ENCODE measurements at regions of chr10 and their contacts with region 1.

Region 1: DNA sequence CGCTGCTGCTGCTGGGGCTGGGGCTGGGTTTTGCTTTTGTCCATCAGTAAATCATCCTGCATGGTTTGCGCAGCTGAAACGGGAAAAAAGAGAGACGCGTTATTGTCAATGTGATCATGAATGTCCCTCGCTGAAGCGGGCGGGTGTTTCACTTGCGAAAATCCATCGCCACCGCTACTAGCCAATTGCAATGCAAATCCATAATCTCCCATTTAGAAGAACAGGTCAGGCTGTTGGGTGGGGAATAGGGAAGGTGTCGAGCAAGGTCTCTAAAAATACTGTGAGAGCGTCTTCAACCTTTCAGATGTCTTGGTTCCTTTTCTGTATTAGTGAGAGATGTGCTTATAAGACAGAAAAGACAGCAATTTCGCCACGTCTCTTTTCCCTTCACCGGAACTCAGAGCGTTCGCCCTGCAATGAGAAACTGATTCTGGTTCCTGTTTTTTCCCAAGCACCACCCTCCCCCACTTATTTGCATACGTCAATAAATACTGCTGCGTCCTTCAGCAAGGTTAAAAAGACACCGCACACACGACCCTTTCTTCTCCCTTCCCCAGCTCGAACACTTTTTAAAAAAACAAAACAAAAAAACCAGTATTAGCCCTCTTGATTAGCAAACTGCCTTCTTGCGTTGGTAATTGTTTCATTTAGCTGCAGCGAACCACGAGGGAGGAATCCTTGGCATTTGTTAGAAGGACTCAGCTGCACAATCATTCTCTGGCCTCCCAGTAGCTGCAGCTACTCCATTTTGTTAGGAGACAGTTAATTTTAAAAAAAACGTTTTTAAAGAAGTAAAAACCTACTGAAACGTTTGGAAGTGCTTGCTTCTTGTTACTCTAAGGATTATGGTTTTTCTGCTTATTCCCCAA is 50.4 kb downstream of the CPEB3 start:
- DNase-seq: peak; percentile 73
- H3K27ac ChIP-seq: peak overlapping the region; percentile 91
- CTCF ChIP-seq: no peak

Region 2: DNA sequence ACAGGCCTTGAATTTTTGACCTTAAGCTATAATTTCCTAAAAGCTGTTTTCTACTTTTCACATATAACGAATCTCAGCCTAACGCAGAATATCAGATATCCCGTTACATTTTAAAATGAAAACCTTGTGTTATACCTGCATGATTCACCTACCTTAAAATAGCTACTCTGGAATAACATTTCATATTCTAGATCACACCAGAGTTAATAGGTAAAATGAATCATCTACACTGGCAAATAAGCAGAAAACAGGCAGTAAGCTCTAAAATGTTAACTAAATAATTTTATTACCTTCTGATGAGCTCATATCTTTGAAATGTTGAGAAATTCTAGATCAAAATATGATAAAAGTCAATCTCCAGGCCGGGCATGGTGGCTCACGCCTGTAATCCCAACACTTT is 21.0 kb before region 1 on chr10:
- CTCF ChIA-PET with region 1: no interaction called
- POLR2A ChIA-PET with region 1: interaction called, 15 read pairs
- DNase-seq: no peak
- H3K27ac ChIP-seq: peak overlapping the region; percentile 56
- CTCF ChIP-seq: no peak

Region 3: DNA sequence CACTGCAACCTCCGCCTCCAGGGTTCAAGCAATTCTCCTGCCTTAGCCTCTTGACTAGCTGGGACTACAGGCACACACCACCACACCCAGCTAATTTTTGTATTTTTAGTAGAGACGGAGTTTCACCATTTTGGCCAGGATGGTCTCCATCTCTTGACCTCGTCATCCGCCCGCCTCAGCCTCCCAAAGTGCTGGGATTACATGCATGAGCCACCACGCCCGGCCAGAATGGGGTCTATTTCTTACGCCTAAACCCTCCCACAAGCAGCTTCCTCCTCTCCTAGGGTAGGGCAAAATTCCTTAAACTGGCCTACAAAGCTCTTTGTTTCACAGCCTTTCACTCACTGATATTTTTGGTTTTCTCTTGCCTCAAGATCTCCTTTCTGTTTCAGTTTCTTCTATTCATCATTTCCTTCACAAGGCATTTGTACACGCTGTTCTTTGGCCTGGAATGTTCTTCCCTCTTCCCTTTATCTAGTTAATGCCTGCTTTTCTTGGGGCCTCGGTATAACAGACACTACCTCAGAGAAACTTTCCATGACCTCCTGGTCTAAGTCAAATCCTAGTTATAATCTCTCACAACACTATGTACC is 43.7 kb after region 1 on chr10:
- CTCF ChIA-PET with region 1: no interaction called
- POLR2A ChIA-PET with region 1: no interaction called
- DNase-seq: no peak
- H3K27ac ChIP-seq: no peak overlapping the region
- CTCF ChIP-seq: no peak

Region 4: DNA sequence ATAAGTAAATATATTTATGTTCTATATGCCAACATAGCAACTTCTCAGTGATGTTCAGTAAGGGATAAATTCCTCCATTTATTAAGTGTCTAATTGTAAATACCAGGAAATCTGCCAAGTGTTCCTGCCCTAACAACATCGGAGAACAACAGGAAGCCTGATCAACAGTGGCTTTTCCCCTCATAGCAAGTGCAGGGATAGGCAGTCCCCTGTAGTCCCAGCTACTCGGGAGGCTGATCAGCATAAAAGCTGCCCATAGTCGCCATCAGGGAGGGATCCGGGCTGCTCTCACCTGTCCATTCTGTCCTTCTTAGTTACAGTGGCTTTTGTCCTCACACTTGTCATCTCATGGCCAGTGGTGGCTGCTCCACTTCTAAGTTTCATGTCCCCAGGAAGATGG is 192.1 kb after region 1 on chr10:
- CTCF ChIA-PET with region 1: interaction called, 5 read pairs
- POLR2A ChIA-PET with region 1: interaction called, 12 read pairs
- DNase-seq: no peak
- H3K27ac ChIP-seq: no peak overlapping the region
- CTCF ChIP-seq: no peak

Region 5: DNA sequence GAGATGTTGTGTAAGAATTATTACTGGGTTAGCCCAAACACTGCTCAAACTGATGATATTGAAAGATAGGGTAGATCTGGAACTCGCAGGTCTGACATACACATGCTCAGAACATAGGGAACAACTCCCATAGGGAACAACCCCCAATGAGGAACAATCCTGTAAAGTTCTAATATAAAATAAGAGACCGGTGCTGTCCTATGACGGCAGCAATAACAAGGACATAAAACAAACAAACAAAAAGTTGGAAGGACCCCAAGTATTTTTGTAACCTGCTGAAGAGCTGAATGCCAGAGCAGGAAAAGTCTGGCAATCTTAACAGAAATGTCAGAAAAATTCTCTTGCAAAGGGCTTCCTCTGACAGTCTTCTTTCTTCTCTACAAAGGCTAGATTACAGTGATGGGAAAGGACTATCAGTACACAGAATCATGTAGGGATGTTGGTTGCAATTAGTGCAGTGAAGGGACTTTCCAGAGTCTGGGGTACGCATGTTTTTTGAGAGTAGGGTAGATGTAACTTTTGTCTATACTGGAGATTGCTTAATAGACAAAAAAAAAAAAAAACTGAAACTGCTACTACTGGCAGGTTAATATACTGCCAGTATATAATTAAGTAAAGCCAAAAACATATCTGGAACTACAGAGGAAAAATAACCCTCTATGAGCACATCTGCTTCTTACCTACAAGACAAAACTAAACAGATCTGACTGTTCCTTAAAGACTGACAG is 297.9 kb after region 1 on chr10:
- CTCF ChIA-PET with region 1: no interaction called
- POLR2A ChIA-PET with region 1: no interaction called
- DNase-seq: no peak
- H3K27ac ChIP-seq: no peak overlapping the region
- CTCF ChIP-seq: no peak

Measured in RWPE1 (cell line).